ENCODE measurements at regions of chr20 and their contacts with region 1.

Region 1: GRCh38 chr20:10434467-10434831 is 427 bp upstream of the MKKS start:
- DNase-seq: peak; percentile 63 to 94 (median 76)
- ATAC-seq: peak; percentile 75
- H3K4me3 ChIP-seq: peak overlapping the region; percentile 73
- H3K27ac ChIP-seq: peak overlapping the region; percentile 88
- H3K4me1 ChIP-seq: peaks cover 12 to 24% of the 10 kb centered on the region in 2 experiments; a peak in 4 of 5 replicates
- H3K27me3 ChIP-seq: no peaks in the 10 kb centered on the region
- CTCF ChIP-seq: no peak
- EP300 ChIP-seq: no peak
- POLR2A ChIP-seq: peak; percentile 89
- RAD21 ChIP-seq: no peak

Region 2: GRCh38 chr20:10492065-10492464 is 57.6 kb after region 1 on chr20:
- CTCF ChIA-PET with region 1: no interaction called
- POLR2A ChIA-PET with region 1: interaction called, 3 read pairs
- in situ Hi-C with region 1: no loop called
- intact Hi-C with region 1: loop called (anchors 5 kb)
- DNase-seq: peak in 3 of 4 experiments; percentile 14 to 24 (median 15)
- ATAC-seq: peak; percentile 86
- H3K4me3 ChIP-seq: no peak overlapping the region
- H3K27ac ChIP-seq: no peak overlapping the region
- H3K4me1 ChIP-seq: peaks cover 0 to 8% of the 10 kb centered on the region in 2 experiments; a peak in 2 of 5 replicates
- H3K27me3 ChIP-seq: no peaks in the 10 kb centered on the region
- CTCF ChIP-seq: no peak
- EP300 ChIP-seq: no peak
- POLR2A ChIP-seq: no peak
- RAD21 ChIP-seq: no peak